ENCODE measurements at regions of chr7 and their contacts with region 1.

Region 1: DNA sequence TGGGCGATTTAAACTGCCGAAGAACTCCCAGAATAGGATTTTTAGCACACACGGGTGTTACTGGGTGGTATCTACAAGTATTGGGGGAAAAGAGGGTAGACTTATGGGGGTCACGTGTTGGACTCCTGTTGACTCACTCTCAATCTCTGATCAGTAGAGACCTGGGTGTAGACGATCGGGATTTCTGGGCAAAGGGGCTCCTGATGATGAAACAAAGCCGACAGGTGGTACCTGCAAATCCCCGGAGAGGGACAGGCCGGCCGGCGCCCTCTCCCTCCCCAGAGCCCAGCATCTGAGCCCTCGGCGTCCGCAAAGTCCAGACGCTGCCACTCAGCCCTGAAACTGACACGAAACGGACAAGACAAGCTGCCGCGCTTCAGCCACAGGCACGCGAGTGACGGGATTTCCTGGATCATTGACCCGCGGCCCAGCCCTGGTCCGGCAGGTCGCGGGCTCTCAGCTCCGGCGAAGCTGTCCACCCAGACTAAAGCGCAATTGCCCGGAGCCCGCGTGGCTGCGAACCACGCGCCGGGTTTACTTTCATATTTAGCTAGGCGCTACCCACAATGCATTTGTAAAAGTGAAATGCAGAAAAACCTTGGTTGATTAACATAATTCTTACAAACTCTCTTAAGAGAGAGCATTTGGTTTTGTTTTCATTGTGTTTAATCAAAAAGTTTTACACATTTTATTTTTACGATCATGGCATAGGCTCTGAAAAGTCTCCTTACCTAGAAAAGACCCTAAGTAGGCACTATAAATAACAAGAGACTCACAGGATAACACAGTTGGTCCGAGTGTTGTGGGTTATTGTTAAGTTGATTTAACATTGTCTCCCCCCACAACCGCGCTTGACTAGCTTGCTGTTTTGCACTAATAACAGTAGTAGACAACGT is 56.9 kb upstream of the EZH2 start:
- DNase-seq: peak; percentile 83 to 95 (median 86)
- ATAC-seq: peak; percentile 82
- H3K4me3 ChIP-seq: peak overlapping the region; percentile 71
- H3K27ac ChIP-seq: peak overlapping the region; percentile 91
- H3K4me1 ChIP-seq: peaks cover 4 to 6% of the 10 kb centered on the region in 2 experiments; a peak in 2 of 5 replicates
- H3K27me3 ChIP-seq: no peaks in the 10 kb centered on the region
- CTCF ChIP-seq: no peak; a peak in 1 of 6 replicates
- EP300 ChIP-seq: peak; percentile 42; the same call in 1 of the 2 replicates
- POLR2A ChIP-seq: peak; percentile 96
- RAD21 ChIP-seq: no peak

Region 2: DNA sequence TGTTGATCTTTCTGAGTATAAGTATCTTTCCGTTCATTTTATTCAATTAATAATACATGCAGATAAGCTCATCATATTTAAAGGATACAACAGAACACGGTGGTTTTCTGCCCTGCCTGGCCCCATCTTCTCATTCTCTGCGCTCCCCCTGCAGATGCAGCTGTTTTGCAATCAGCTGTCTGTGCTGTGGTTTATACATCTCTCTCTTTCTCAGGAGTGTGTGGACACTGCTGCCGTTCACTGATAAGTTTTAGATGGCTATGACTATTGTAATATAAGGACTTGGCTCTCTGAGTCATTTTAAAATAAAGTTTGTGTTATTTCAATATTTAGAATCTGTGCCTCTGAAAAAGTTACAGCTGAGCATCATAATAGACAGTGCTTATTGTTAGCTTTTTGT is 187.7 kb before region 1 on chr7:
- CTCF ChIA-PET with region 1: no interaction called
- POLR2A ChIA-PET with region 1: no interaction called
- in situ Hi-C with region 1: no loop called
- intact Hi-C with region 1: no loop called
- DNase-seq: peak; percentile 59 to 74 (median 68)
- ATAC-seq: peak; percentile 80
- H3K4me3 ChIP-seq: no peak overlapping the region
- H3K27ac ChIP-seq: no peak overlapping the region
- H3K4me1 ChIP-seq: peaks cover 4 to 5% of the 10 kb centered on the region in 2 experiments; a peak in 2 of 5 replicates
- H3K27me3 ChIP-seq: no peaks in the 10 kb centered on the region
- CTCF ChIP-seq: no peak
- EP300 ChIP-seq: no peak
- POLR2A ChIP-seq: no peak
- RAD21 ChIP-seq: no peak

Region 3: DNA sequence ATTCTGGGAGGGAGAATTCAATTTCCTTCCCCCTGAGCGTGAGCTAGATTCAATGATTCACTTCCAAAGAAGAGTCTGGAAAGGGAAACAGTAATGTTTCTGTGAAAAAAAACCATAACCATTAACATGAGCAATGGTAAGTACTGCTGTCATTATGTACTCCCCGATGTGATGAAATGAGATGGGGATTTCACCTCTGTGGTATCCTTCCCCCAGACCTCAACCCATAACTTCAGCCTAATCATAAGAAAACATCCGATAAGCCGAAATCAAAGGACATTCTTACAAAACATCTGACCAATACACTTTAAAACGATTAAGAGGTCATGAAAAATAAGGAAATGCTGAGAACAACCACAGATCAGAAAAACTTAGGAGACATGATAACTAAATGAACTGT is 84.1 kb before region 1 on chr7:
- CTCF ChIA-PET with region 1: no interaction called
- POLR2A ChIA-PET with region 1: no interaction called
- in situ Hi-C with region 1: no loop called
- intact Hi-C with region 1: loop called (anchors 2 kb)
- DNase-seq: peak in 1 of 4 experiments; percentile 52
- ATAC-seq: peak; percentile 14
- H3K4me3 ChIP-seq: no peak overlapping the region
- H3K27ac ChIP-seq: no peak overlapping the region; the same call in 2 of the 3 replicates
- H3K4me1 ChIP-seq: peaks cover 0 to 24% of the 10 kb centered on the region in 2 experiments; a peak in 4 of 5 replicates
- H3K27me3 ChIP-seq: no peaks in the 10 kb centered on the region
- CTCF ChIP-seq: no peak
- EP300 ChIP-seq: no peak
- POLR2A ChIP-seq: no peak
- RAD21 ChIP-seq: no peak

Region 4: DNA sequence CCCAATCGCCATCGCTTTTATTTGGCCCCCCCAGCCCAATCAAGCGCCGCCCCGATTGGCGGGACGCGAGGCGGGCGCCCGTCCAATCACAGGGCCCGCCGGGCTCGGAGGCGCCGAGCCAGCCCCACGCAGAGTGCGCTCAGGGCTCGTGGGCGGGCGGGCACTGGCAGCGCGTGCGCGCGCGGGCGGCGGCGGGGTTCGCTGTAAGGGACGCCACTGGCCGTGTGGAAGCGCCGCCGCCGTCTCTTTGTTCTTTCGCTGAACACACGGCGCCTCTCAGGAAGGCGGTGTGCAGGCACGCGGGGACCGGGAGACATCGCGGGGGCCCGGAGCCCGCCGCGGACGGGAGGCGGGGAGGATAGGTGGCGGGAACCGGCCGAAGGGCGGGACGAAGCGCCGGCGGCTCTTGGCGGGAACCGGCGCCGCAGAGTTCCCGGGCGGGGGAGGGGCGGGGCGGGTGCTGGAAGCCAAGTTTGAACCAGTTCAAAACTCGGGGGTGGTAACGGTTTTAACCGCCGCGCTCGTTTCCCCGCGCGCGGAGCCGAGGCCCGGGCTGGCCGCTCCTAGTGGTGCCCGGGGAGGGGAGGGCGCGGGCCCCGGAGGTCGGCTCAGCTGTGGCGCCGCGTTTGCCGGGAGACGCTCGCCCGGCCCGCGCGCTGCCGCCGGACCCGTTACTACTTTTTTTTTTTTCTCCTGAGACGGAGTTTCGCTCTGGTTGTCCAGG is 56.5 kb before region 1 on chr7:
- CTCF ChIA-PET with region 1: no interaction called
- POLR2A ChIA-PET with region 1: interaction called, 11 read pairs
- in situ Hi-C with region 1: no loop called
- intact Hi-C with region 1: loop called (anchors 1 kb)
- DNase-seq: peak; percentile 99 to 100 (median 99)
- ATAC-seq: peak; percentile 92
- H3K4me3 ChIP-seq: peak overlapping the region; percentile 96
- H3K27ac ChIP-seq: peak overlapping the region; percentile 98
- H3K4me1 ChIP-seq: peaks cover 9 to 23% of the 10 kb centered on the region in 2 experiments; a peak in 4 of 5 replicates
- H3K27me3 ChIP-seq: no peaks in the 10 kb centered on the region
- CTCF ChIP-seq: no peak
- EP300 ChIP-seq: peak; percentile 81
- POLR2A ChIP-seq: peak; percentile 94
- RAD21 ChIP-seq: peak in 1 of 2 experiments; percentile 22; a peak in 1 of 4 replicates

Region 5: GRCh38 chr7:148898845-148899484 is 42.0 kb before region 1 on chr7:
- CTCF ChIA-PET with region 1: no interaction called
- POLR2A ChIA-PET with region 1: interaction called, 4 read pairs
- in situ Hi-C with region 1: no loop called
- intact Hi-C with region 1: loop called (anchors 5 kb)
- DNase-seq: peak; percentile 63 to 74 (median 68)
- ATAC-seq: peak; percentile 87
- H3K4me3 ChIP-seq: no peak overlapping the region
- H3K27ac ChIP-seq: no peak overlapping the region
- H3K4me1 ChIP-seq: peaks cover 0 to 6% of the 10 kb centered on the region in 2 experiments; a peak in 2 of 5 replicates
- H3K27me3 ChIP-seq: no peaks in the 10 kb centered on the region
- CTCF ChIP-seq: no peak
- EP300 ChIP-seq: no peak
- POLR2A ChIP-seq: no peak
- RAD21 ChIP-seq: no peak

Region 6: GRCh38 chr7:148954766-148955165 is 13.8 kb after region 1 on chr7:
- CTCF ChIA-PET with region 1: no interaction called
- POLR2A ChIA-PET with region 1: interaction called, 11 read pairs
- in situ Hi-C with region 1: no loop called
- intact Hi-C with region 1: no loop called
- DNase-seq: no peak
- ATAC-seq: no peak
- H3K4me3 ChIP-seq: no peak overlapping the region
- H3K27ac ChIP-seq: no peak overlapping the region
- H3K4me1 ChIP-seq: peaks cover 4 to 10% of the 10 kb centered on the region in 2 experiments; a peak in 2 of 5 replicates
- H3K27me3 ChIP-seq: no peaks in the 10 kb centered on the region
- CTCF ChIP-seq: no peak
- EP300 ChIP-seq: no peak
- POLR2A ChIP-seq: no peak
- RAD21 ChIP-seq: no peak

Region 7: DNA sequence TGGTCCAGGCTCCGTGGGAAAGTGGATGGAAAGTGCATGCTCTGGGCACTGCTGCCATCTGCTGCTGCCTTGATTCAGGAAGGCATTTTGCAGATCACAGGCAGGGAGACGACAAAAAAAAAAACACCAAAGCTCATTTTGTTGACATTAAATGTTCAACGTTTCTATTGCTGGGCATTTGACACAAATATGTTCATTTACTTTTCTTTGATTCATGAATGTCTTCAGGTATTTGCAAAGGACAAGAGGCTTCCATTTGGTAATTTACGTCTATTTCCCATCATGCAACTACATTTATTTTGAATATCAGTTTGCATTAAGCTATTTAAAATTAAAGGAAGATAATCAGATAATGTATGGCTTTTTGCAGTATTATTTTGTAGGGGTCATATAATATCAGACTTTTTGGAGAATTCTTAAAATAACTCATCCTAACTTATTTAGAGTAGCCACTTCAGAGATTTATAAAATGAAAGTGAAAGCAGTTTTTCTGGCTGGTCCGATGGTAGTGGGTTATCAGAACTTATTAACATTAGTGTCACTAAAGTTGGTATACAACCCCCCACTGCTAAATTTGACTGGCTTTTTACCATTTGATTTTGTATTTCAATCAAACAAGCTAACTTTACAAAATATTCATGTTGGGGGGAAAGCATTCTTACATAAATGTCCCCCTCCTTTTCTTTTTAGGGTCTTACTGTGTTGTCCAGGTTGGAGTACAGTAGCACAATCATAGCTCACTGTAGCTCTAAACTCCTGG is 22.1 kb after region 1 on chr7:
- CTCF ChIA-PET with region 1: no interaction called
- POLR2A ChIA-PET with region 1: interaction called, 7 read pairs
- in situ Hi-C with region 1: no loop called
- intact Hi-C with region 1: loop called (anchors 1 kb)
- DNase-seq: peak; percentile 61 to 86 (median 72)
- ATAC-seq: peak; percentile 65
- H3K4me3 ChIP-seq: peak overlapping the region; percentile 49
- H3K27ac ChIP-seq: peak overlapping the region; percentile 62
- H3K4me1 ChIP-seq: peaks cover 16 to 32% of the 10 kb centered on the region in 2 experiments; a peak in 4 of 5 replicates
- H3K27me3 ChIP-seq: no peaks in the 10 kb centered on the region
- CTCF ChIP-seq: peak; percentile 89 to 98 (median 97)
- EP300 ChIP-seq: peak; percentile 41; the same call in 1 of the 2 replicates
- POLR2A ChIP-seq: no peak
- RAD21 ChIP-seq: peak; percentile 95 to 96

Region 8: DNA sequence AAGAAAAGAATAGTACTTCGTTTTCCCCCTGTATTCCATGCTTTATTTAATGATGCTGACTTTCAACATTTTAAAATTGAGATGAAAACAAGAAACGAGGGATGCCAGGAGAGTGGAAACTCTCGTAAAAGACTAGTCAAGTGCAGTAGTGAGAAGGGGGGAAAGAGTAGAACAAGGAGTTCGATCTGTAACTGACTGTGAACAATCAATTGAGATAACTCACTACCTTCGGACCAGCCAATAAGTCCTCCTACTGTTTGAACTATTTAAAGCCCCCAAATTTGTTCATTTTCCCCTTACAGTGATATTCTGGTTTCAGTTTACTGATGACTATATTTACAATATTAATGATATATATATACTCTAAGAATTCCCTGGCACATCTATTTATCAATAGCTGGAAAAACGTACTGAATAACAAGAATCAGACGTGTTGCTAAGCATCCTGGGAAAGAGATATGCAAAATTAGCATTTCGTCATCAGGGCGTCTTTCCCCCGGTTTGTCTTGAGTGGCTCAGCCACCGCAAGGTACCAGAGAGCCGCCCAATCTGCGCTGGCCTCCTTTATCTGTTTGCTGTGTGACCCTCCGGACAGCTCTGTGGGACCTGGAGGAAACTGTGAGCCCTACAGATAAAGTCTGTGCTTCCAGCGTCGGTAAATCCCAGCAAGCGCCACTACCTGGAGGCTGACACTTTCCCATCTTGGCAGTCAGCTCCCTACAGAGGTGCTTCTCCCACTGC is 46.2 kb after region 1 on chr7:
- CTCF ChIA-PET with region 1: no interaction called
- POLR2A ChIA-PET with region 1: interaction called, 7 read pairs
- in situ Hi-C with region 1: no loop called
- intact Hi-C with region 1: loop called (anchors 2 kb)
- DNase-seq: peak; percentile 97 to 98 (median 98)
- ATAC-seq: peak; percentile 88
- H3K4me3 ChIP-seq: peak overlapping the region; percentile 53
- H3K27ac ChIP-seq: peak overlapping the region; percentile 75
- H3K4me1 ChIP-seq: peaks cover 10 to 27% of the 10 kb centered on the region in 2 experiments; a peak in 4 of 5 replicates
- H3K27me3 ChIP-seq: no peaks in the 10 kb centered on the region
- CTCF ChIP-seq: no peak; a peak in 1 of 6 replicates
- EP300 ChIP-seq: no peak; the same call in none of the 2 replicates
- POLR2A ChIP-seq: no peak
- RAD21 ChIP-seq: peak; percentile 5 to 13; a peak in 2 of 4 replicates